GM13976 (cell line): ENCODE measurements at regions of chr11 and their contacts with region 1.

Region 1: GRCh38 chr11:34492806-34493414 is 20.7 kb downstream of the ELF5 start:
- DNase-seq: peak; percentile 66
- CTCF ChIP-seq: peak; percentile 67

Region 2: GRCh38 chr11:34126959-34127848 is 365.7 kb before region 1 on chr11:
- in situ Hi-C with region 1: no loop called
- DNase-seq: no peak
- CTCF ChIP-seq: no peak

Region 3: DNA sequence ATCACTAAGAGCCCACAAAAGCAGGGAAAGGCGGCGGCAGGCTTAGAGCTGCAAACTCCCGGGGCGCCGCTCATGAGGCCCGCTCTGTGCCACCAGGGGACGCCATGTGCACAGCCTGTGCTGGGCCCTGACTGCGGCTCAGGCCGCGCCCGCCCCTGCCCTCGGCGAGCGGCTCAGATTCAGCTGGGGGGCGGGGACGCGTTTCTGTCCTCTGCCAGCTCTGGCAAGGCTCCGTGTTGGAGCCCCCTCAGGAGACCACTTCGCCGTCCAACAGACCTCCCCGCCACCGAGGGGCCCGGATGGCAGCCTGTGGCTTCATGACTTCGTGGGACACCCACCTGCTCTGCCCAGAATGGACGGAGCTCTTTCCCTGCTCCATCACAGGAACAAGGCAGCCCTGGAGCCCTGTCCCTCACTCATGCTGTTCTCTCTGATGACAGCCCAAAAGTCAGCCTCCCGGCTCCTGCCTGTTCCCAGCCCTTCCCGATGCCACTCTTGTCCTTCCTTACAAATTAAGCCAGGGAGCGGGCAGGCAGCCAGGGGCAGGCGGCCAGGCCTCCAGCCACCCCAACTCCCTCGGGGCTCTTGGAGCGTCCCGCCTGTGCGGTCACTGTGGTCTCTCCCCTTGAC is 318.4 kb before region 1 on chr11:
- in situ Hi-C with region 1: loop called (anchors 25 kb)
- DNase-seq: peak; percentile 92
- CTCF ChIP-seq: peak; percentile 98